Breast epithelium (tissue), 4 donors: ENCODE measurements at regions of chr14 and their contacts with region 1.

Region 1: DNA sequence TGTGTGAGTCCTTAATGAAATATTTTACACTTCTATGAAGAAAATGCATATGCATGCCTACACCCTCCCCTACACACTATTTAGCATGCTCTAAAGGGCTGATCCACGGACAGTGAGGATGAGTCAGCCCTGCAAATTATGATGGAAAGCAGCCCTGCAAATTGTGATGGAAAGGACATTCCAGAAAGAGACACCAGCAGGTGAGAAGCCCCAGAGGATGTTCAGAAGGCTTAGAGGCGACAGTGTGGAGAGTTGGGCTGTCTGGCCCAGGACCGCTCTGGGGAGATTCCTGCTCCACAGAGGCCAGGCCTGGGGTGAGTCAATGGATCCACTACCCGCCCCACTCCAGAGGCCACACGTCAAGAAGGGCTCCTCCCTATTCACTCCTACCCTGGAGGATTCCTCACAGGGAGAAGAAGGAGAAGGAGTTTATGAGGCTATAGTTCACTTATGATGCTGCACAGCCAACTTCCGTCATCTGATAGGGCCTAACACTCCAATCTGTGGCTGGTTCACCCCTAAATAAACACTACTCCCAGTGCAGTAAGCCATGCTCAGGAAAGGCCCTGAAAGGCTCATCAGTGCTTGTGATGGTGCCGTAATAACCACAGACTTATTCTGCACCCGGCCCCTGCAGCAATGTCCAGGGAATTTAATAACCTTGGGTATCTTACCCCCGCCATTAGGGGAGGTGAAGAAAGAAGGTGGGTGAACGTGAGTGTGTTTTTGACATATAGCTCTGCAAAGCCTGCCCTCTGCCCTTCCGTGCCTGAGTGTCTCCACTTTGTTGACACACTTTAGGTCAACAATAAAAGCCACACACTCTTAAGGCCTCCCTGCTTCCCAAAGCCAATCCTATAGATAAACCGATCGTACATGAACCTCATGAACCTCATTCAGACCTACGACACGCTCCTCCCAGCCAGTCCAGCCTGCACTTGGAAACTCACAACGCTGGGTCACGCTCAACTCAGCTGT is 46.4 kb downstream of the CLMN start:
- DNase-seq: peak in 1 of 2 donors; percentile 7
- H3K4me3 ChIP-seq: no peak overlapping the region
- H3K27ac ChIP-seq: peak overlapping the region in 1 of 2 donors; percentile 36
- H3K4me1 ChIP-seq: no peaks in the 10 kb centered on the region
- H3K27me3 ChIP-seq: no peaks in the 10 kb centered on the region
- CTCF ChIP-seq: no peak
- POLR2A ChIP-seq: no peak

Region 2: DNA sequence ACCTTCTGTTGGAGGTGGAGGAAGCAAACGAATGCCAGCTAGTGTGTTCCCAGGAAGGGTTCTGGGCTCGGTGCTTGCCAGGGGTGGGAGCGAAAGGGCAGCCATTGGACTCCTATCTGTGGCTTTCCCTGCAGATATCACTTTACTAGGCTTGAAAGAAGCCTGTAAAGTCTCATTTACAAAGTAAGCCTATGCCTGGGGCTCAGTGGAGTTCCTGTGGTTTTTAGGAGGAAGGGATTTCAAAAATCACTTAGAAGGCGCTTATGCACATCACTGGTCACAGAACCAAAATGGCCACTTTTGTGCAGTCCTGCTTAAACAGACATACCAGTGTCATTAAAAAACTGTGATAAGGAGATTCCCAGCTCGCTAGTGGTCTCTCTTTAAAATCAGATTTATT is 23.7 kb after region 1 on chr14:
- intact Hi-C with region 1: loop called (anchors 1 kb)
- DNase-seq: no peak
- H3K4me3 ChIP-seq: no peak overlapping the region
- H3K27ac ChIP-seq: peak overlapping the region; percentile 18 to 54
- H3K4me1 ChIP-seq: no peaks in the 10 kb centered on the region
- H3K27me3 ChIP-seq: no peaks in the 10 kb centered on the region
- CTCF ChIP-seq: no peak
- POLR2A ChIP-seq: no peak